GM13977 (cell line): ENCODE measurements at regions of chr17 and their contacts with region 1.

Region 1: GRCh38 chr17:74457146-74457819 is 9.2 kb upstream of the CD300A start:
- DNase-seq: peak; percentile 78
- CTCF ChIP-seq: peak; percentile 91

Region 2: DNA sequence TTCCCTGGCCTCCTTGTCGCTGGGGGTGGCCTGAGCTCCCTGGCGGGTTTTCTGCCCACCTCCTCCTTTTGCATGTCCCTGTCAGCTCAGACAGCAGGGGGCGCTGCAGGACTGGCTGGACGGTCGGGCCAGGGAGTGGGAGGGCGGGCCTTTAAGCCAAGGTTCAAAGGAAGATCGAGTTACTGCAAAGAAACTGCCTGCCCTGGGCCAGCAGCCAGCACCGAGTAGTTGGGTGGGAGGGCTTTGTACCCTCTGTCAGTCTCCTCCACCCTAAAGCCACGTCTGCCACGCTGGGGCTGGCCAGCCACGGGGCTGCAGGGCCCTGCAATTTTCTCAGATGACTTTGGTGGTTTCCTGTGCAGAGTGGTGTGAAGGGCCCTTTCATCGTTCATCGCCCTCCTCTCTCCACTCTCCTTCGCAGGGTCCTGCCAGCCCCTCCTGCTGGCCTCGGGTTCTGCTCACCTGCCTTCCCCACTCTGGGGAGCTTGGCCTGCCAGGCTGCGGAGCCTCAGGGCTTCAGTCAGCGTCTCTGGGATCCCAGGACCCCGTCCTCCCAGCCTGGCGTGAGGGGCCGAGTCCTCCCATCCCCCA is 77.7 kb before region 1 on chr17:
- in situ Hi-C with region 1: loop called (anchors 5 kb)
- DNase-seq: peak; percentile 90
- CTCF ChIP-seq: peak; percentile 96

Region 3: DNA sequence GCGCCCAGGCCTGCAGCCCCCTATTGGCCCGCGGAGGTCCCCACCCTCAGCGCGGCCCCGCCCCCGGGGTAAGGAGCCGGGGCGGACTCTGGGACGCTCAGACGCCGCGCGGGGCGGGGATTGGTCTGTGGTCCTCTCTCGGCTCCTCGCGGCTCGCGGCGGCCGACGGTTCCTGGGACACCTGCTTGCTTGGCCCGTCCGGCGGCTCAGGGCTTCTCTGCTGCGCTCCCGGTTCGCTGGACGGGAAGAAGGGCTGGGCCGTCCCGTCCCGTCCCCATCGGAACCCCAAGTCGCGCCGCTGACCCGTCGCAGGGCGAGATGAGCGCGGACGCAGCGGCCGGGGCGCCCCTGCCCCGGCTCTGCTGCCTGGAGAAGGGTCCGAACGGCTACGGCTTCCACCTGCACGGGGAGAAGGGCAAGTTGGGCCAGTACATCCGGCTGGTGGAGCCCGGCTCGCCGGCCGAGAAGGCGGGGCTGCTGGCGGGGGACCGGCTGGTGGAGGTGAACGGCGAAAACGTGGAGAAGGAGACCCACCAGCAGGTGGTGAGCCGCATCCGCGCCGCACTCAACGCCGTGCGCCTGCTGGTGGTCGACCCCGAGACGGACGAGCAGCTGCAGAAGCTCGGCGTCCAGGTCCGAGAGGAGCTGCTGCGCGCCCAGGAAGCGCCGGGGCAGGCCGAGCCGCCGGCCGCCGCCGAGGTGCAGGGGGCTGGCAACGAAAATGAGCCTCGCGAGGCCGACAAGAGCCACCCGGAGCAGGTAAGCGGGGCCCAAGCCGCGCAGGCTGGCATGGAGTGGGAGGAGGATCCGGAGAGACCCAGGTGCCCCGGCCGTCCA is 291.5 kb after region 1 on chr17 and contains the start of gene NHERF1:
- in situ Hi-C with region 1: no loop called
- DNase-seq: peak; percentile 99
- CTCF ChIP-seq: peak; percentile 22